ENCODE measurements at regions of chr3 and their contacts with region 1.

Region 1: DNA sequence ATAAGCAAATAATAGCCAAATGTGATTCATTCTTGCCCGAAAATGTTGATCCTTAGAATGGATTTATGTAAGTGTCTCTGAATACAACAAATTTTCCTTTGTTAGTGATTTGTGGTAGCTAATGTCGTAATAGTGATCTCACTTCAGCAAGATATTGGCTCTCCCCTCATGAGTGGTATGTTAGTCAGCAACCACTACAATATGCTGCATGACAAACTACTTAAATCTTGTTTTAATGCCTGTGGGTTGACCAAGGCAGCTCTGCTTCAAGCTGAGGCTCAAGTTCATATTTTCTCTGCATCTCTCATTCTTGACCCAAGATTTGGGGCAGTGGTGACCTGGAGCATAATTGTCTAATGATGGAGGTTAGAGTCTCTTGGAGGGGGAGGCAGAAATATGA is 49.8 kb upstream of the GALNT15 start:
- DNase-seq: no peak
- H3K4me3 ChIP-seq: no peak overlapping the region
- H3K27ac ChIP-seq: no peak overlapping the region
- H3K4me1 ChIP-seq: peaks cover 2% of the 10 kb centered on the region
- H3K27me3 ChIP-seq: no peaks in the 10 kb centered on the region
- CTCF ChIP-seq: no peak
- POLR2A ChIP-seq: no peak

Region 2: DNA sequence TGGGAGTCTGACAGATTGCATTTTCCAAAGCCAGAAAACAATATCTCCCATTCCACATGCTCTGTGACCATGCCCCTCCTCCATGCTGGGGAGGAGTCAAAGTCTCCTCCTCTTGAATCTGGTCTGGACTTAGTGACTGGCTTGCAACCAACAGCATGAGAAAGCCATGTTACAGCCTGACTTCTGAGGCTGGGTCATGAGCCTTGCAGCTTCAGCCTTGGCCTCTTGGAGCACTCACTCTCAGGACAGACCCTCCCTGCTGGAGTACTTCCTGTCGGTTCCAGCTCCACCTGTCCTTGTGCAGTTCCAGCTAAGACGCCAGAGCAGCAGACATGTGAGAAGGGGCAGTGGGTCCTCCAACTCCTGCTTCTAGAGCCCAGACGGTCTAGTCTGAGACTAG is 976.0 kb before region 1 on chr3:
- CTCF ChIA-PET with region 1: no interaction called
- POLR2A ChIA-PET with region 1: no interaction called
- dilution Hi-C with region 1: no loop called
- intact Hi-C with region 1: loop called (anchors 5 kb)
- DNase-seq: no peak
- H3K4me3 ChIP-seq: no peak overlapping the region
- H3K27ac ChIP-seq: no peak overlapping the region
- H3K4me1 ChIP-seq: peaks cover 11% of the 10 kb centered on the region
- H3K27me3 ChIP-seq: peaks cover 6 to 11% of the 10 kb centered on the region in 2 experiments
- CTCF ChIP-seq: no peak
- POLR2A ChIP-seq: no peak

Region 3: DNA sequence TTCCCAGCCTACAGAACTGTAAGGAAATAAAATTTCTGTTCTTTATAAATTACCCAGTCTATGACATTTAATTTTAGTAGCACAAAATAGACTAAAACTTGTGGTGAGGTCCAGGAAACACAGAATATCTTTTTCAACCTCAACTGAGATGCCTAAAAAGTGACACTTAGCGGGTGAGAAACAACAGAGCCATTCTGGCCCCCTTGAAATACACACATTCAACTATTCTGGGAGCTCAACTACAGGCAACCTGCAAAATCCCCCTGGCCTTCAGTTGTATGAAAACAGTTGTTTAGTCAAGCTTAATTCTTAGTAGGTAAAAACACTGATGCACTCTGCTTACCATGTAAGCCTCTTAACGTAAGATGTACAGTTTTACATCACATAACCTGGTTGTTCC is 393.6 kb before region 1 on chr3:
- CTCF ChIA-PET with region 1: no interaction called
- POLR2A ChIA-PET with region 1: no interaction called
- dilution Hi-C with region 1: no loop called
- intact Hi-C with region 1: no loop called
- DNase-seq: no peak
- H3K4me3 ChIP-seq: no peak overlapping the region
- H3K27ac ChIP-seq: no peak overlapping the region
- H3K4me1 ChIP-seq: peaks cover under 1% of the 10 kb centered on the region
- H3K27me3 ChIP-seq: no peaks in the 10 kb centered on the region
- CTCF ChIP-seq: no peak
- POLR2A ChIP-seq: no peak

Measured in endothelial cell of umbilical vein (primary cell).